Activated CD8-positive, alpha-beta T cell treated with anti-CD3 and anti-CD28 coated beads for 36 hours (primary cell): ENCODE measurements at regions of chr1 and their contacts with region 1.

Region 1: DNA sequence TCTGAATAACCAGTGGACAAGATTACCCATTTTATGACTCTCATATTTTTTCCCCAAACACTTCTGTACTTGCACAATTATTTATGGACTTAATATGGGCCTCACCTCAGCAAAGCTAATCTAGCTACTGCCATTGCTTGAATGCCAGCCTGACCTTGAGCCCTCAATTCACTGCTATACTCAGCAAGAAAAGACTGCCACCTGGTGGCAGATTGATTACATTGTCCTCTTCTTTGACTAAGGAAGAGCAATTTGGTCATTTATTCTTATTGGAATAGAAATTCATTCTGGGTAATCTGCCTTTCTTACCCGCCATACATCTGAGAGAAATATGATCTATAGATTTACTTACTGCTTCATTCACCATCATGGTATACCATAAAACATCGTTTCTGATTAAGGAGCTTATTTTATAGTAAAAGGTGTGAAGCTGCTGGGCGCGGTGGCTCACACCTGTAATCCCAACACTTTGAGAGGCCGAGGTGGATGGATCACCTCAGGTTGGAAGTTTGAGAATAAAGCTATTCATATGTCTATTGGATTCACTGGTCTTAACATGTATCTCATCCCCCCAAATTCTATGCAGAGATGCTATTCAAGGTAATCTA is 32.9 kb upstream of the DIPK1A start:
- DNase-seq: peak; percentile 85
- ATAC-seq: peak; percentile 78
- H3K4me3 Mint-ChIP-seq: no peak overlapping the region
- H3K27ac Mint-ChIP-seq: peak overlapping the region; percentile 22
- H3K4me1 Mint-ChIP-seq: peaks cover 47% of the 10 kb centered on the region
- H3K27me3 Mint-ChIP-seq: no peaks in the 10 kb centered on the region
- CTCF ChIP-seq: peak; percentile 92

Region 2: DNA sequence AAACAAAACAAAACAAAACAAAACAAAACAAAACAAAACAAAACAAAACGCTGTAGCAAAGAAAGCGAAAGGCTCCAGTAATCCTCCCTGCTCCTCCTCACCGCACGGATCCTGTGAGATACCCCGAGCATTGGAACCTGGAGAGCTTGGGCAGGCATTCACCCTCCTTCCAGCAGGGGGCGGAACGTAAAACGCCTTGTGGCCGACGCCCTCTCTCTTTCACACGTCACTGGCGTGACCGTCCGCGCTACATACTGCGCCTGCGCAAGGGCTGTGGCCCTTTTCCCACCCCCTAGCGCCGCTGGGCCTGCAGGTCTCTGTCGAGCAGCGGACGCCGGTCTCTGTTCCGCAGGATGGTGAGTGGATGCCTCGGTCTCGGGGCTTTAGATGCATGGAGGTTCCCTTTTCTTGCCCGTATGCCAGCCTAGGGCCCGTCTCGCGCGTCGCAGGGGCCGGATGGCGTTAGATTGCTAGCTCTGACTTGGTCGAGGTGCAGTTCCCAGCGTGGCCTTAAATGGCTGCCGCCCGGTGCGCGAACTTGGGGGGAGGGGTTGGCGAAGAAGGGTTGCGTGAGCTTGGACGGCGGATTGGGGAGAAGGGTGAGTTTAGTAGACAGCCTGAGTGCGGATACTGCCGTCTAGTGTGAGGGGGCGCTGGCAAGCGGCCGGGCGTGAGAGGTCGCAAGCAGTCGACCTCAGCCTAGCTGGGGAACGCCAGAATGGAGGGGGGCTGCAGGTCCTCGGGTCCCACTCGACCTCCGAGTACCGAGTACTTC is 162.3 kb before region 1 on chr1 and contains the start of gene RPL5:
- CTCF ChIA-PET with region 1: interaction called, 11 read pairs
- POLR2A ChIA-PET with region 1: interaction called, 3 read pairs
- intact Hi-C with region 1: no loop called
- DNase-seq: peak; percentile 98
- ATAC-seq: peak; percentile 93
- H3K4me3 Mint-ChIP-seq: peak within 1 kb of the TSS; percentile 99
- H3K27ac Mint-ChIP-seq: peak within 1 kb of the TSS; percentile 99
- H3K4me1 Mint-ChIP-seq: peaks cover 28% of the 10 kb centered on the region
- H3K27me3 Mint-ChIP-seq: no peaks in the 10 kb centered on the region
- CTCF ChIP-seq: peak; percentile 95
- total RNA-seq, gene RPL5: 1,782 to 1,792 TPM

Region 3: DNA sequence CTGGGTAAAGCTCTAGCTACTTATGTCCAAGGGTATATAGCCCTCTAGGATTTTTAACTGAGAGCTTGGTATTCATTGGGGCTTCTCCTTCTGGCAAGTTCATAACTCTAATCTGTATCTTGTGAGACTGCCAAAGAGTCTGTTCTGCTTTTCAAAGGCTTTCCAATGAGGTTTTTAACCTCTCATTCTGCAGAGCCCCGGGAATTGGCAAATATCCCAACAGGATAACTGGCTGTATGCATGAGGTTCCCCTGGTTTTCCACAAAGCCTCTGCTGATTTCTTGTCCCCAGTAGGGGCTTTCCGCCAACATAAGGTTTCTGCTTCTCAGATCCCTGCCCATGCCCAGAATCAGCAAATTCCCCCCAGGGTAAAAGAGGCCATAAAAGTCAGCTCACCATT is 121.5 kb before region 1 on chr1:
- CTCF ChIA-PET with region 1: interaction called, 36 read pairs
- POLR2A ChIA-PET with region 1: interaction called, 3 read pairs
- intact Hi-C with region 1: no loop called
- DNase-seq: no peak
- ATAC-seq: no peak
- H3K4me3 Mint-ChIP-seq: no peak overlapping the region
- H3K27ac Mint-ChIP-seq: no peak overlapping the region
- H3K4me1 Mint-ChIP-seq: peaks cover 21% of the 10 kb centered on the region
- H3K27me3 Mint-ChIP-seq: no peaks in the 10 kb centered on the region
- CTCF ChIP-seq: no peak

Region 4: DNA sequence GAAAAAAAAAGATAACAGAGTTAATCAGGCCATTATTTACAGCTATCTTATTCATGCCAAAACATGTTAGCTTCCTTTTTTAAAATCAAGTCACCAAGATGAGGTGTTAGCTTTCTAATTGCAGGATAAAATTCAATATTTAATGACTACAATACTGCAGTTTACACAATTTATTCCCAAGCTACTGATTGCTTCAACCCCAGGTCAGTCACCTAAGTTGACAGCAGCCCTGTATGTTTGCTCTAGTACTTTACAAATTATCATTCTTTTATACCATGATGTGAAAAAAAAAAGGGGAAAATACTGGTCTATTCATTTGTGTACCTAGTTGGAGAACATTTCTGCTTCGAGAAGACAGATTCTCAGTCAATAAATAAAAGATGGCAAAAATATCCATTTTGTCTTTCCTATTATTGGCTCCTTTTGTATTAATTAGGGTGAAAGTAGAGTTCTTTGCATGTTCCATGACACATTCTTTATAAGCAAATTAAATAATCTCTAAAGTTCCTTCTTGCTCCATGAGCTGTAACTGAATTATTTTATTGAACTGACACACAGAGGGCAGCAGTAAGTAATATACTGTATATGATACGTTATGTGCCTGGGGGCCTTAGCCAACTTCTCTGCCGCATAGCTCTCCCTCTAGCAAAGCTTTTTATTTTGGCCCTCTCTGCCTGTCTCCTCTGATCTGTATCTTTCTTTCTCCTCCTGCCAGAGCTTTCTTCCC is 81.0 kb before region 1 on chr1:
- CTCF ChIA-PET with region 1: interaction called, 14 read pairs
- POLR2A ChIA-PET with region 1: no interaction called
- intact Hi-C with region 1: no loop called
- DNase-seq: no peak
- ATAC-seq: no peak
- H3K4me3 Mint-ChIP-seq: no peak overlapping the region
- H3K27ac Mint-ChIP-seq: no peak overlapping the region
- H3K4me1 Mint-ChIP-seq: peaks cover 20% of the 10 kb centered on the region
- H3K27me3 Mint-ChIP-seq: no peaks in the 10 kb centered on the region
- CTCF ChIP-seq: no peak

Region 5: DNA sequence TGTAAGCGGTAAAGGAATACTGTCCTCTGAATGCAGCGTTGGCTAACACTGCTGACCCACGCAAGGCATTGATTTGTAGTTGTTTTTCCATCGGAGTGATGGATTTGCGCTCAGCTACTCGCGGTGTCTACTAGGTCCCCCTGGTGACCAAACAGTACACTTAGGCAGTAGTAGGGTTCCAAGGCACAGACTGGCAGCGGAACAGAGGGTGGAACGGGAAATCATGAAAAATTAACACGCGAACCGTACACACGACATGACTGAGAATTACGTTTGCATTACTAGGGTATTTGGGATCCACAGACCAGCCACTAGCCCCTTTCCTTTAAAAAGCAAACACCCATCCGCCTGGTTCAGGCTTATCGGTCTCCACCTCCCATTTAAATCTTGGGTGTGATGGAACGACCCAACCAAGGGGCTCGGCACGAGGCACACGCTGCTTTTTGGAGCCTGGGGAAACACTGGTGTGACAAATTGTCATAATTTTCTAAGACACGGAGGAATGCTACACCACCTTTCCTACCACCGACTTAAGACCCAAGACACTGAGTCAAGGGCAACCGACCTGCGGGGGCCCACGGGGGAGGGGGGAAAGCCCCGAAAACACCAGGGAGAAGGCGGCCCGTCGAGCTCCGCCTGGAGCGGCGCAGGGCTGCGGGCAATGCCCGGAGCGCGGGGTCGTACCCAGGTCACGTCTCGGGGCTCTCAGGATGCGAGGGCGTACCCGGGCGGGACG is 33.6 kb before region 1 on chr1:
- CTCF ChIA-PET with region 1: interaction called, 492 read pairs
- POLR2A ChIA-PET with region 1: interaction called, 28 read pairs
- intact Hi-C with region 1: no loop called
- DNase-seq: peak; percentile 76
- ATAC-seq: peak; percentile 50
- H3K4me3 Mint-ChIP-seq: peak overlapping the region; percentile 95
- H3K27ac Mint-ChIP-seq: peak overlapping the region; percentile 97
- H3K4me1 Mint-ChIP-seq: peaks cover 36% of the 10 kb centered on the region
- H3K27me3 Mint-ChIP-seq: no peaks in the 10 kb centered on the region
- CTCF ChIP-seq: peak; percentile 11

Region 6: GRCh38 chr1:93007941-93008577 is 13.8 kb after region 1 on chr1:
- CTCF ChIA-PET with region 1: interaction called, 35 read pairs
- POLR2A ChIA-PET with region 1: interaction called, 3 read pairs
- intact Hi-C with region 1: no loop called
- DNase-seq: no peak
- ATAC-seq: no peak
- H3K4me3 Mint-ChIP-seq: no peak overlapping the region
- H3K27ac Mint-ChIP-seq: no peak overlapping the region
- H3K4me1 Mint-ChIP-seq: no peaks in the 10 kb centered on the region
- H3K27me3 Mint-ChIP-seq: peaks cover 4% of the 10 kb centered on the region
- CTCF ChIP-seq: no peak

Region 7: GRCh38 chr1:93061895-93062792 is 67.9 kb after region 1 on chr1:
- CTCF ChIA-PET with region 1: interaction called, 16 read pairs
- POLR2A ChIA-PET with region 1: no interaction called
- intact Hi-C with region 1: no loop called
- DNase-seq: peak; percentile 71
- ATAC-seq: peak; percentile 91
- H3K4me3 Mint-ChIP-seq: no peak overlapping the region
- H3K27ac Mint-ChIP-seq: no peak overlapping the region
- H3K4me1 Mint-ChIP-seq: peaks cover 3% of the 10 kb centered on the region
- H3K27me3 Mint-ChIP-seq: peaks cover 4% of the 10 kb centered on the region
- CTCF ChIP-seq: peak; percentile 49

Region 8: GRCh38 chr1:93093332-93094006 is 99.3 kb after region 1 on chr1:
- CTCF ChIA-PET with region 1: no interaction called
- POLR2A ChIA-PET with region 1: no interaction called
- intact Hi-C with region 1: no loop called
- DNase-seq: no peak
- ATAC-seq: no peak
- H3K4me3 Mint-ChIP-seq: no peak overlapping the region
- H3K27ac Mint-ChIP-seq: no peak overlapping the region
- H3K4me1 Mint-ChIP-seq: peaks cover 59% of the 10 kb centered on the region
- H3K27me3 Mint-ChIP-seq: no peaks in the 10 kb centered on the region
- CTCF ChIP-seq: no peak